ENCODE measurements at regions of chr7 and their contacts with region 1.

Region 1: DNA sequence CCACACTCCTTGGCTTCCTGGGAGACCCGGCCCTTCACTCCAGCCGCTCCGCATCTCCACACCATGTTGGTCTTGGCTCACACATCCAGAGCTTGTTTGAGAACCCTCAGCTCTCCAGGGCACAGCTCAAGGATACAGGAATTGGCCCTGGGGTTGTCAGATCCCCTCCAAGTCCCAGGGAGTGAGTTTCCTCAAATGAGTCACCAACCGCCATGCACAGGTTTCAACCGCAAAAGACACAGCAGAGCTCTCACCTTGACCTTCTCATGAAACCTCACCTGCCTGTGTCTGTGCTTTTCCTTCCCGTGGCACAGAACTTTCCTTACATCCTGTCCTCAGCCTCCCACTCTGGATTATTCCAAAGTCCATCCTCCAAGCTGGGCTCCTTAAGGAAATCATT is 20.6 kb downstream of the AZGP1 start:
- DNase-seq: no peak
- ATAC-seq: no peak
- H3K4me3 ChIP-seq: no peak overlapping the region
- H3K4me3 Mint-ChIP-seq: no peak overlapping the region
- H3K27ac ChIP-seq: no peak overlapping the region
- H3K27ac Mint-ChIP-seq: no peak overlapping the region
- H3K4me1 ChIP-seq: no peaks in the 10 kb centered on the region
- H3K4me1 Mint-ChIP-seq: no peaks in the 10 kb centered on the region
- H3K27me3 ChIP-seq: peaks cover 3 to 13% of the 10 kb centered on the region in 2 experiments
- H3K27me3 Mint-ChIP-seq: peaks cover 24 to 32% of the 10 kb centered on the region in 2 donors

Region 2: GRCh38 chr7:100418930-100419659 is 463.9 kb after region 1 on chr7:
- CTCF ChIA-PET with region 1: no interaction called
- POLR2A ChIA-PET with region 1: interaction called in 1 of 2 experiments, 10 read pairs
- DNase-seq: no peak
- ATAC-seq: no peak
- H3K4me3 ChIP-seq: no peak overlapping the region
- H3K4me3 Mint-ChIP-seq: no peak overlapping the region
- H3K27ac ChIP-seq: no peak overlapping the region
- H3K27ac Mint-ChIP-seq: no peak overlapping the region
- H3K4me1 ChIP-seq: no peaks in the 10 kb centered on the region
- H3K4me1 Mint-ChIP-seq: no peaks in the 10 kb centered on the region
- H3K27me3 ChIP-seq: no peaks in the 10 kb centered on the region
- H3K27me3 Mint-ChIP-seq: no peaks in the 10 kb centered on the region

Measured in T-cell (primary cell).